ENCODE measurements at regions of chr7 and their contacts with region 1.

Region 1: DNA sequence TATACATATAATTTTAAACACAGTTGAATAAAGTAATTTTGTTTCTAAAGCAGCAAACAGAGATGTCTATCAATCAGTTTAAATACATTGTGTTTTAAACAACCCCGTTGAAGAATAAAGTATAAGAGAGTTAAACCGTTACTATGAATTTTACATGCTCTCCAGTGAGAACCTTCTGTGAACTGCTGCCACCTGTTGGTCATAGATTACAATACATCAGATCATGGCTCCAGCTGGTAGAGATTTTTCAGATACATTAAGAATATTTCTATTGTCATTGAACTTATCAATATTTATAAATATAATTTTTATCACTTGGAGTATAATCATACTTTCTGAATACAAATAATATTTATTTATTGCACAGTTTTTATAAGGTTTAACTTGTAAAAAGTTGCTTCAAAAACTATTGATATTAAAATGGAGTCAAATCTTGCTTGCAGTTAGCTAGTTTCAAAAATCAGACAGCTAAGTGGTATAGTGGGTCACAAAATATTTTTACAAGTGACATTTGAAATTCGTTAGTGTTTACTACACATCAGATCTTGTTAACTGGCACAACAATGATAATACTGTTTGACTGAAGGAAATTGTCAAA is 561.2 kb upstream of the PHF14 start:
- DNase-seq: peak; percentile 44
- H3K4me3 ChIP-seq: no peak overlapping the region
- H3K27ac ChIP-seq: no peak overlapping the region
- H3K4me1 ChIP-seq: no peaks in the 10 kb centered on the region
- H3K27me3 ChIP-seq: no peaks in the 10 kb centered on the region
- CTCF ChIP-seq: peak; percentile 64
- EP300 ChIP-seq: no peak
- RAD21 ChIP-seq: peak; percentile 91

Region 2: GRCh38 chr7:10022957-10023356 is 389.6 kb before region 1 on chr7:
- CTCF ChIA-PET with region 1: no interaction called
- POLR2A ChIA-PET with region 1: no interaction called
- DNase-seq: peak; percentile 13
- H3K4me3 ChIP-seq: no peak overlapping the region
- H3K27ac ChIP-seq: no peak overlapping the region; a peak in 1 of 4 replicates
- H3K4me1 ChIP-seq: no peaks in the 10 kb centered on the region
- H3K27me3 ChIP-seq: no peaks in the 10 kb centered on the region
- CTCF ChIP-seq: no peak
- EP300 ChIP-seq: no peak
- RAD21 ChIP-seq: peak; percentile 69

Region 3: GRCh38 chr7:10401793-10402192 is 10.7 kb before region 1 on chr7:
- CTCF ChIA-PET with region 1: interaction called, 19 read pairs
- POLR2A ChIA-PET with region 1: no interaction called
- DNase-seq: no peak
- H3K4me3 ChIP-seq: no peak overlapping the region
- H3K27ac ChIP-seq: no peak overlapping the region
- H3K4me1 ChIP-seq: no peaks in the 10 kb centered on the region
- H3K27me3 ChIP-seq: no peaks in the 10 kb centered on the region
- CTCF ChIP-seq: no peak
- EP300 ChIP-seq: no peak
- RAD21 ChIP-seq: no peak

Region 4: GRCh38 chr7:10429511-10429910 is 17.0 kb after region 1 on chr7:
- CTCF ChIA-PET with region 1: interaction called, 16 read pairs
- POLR2A ChIA-PET with region 1: no interaction called
- DNase-seq: no peak
- H3K4me3 ChIP-seq: no peak overlapping the region
- H3K27ac ChIP-seq: no peak overlapping the region
- H3K4me1 ChIP-seq: no peaks in the 10 kb centered on the region
- H3K27me3 ChIP-seq: no peaks in the 10 kb centered on the region
- CTCF ChIP-seq: no peak
- EP300 ChIP-seq: no peak
- RAD21 ChIP-seq: no peak

Measured in SK-N-SH (cell line).